HCT116 (cell line): ENCODE measurements at regions of chr19 and their contacts with region 1.

Region 1: DNA sequence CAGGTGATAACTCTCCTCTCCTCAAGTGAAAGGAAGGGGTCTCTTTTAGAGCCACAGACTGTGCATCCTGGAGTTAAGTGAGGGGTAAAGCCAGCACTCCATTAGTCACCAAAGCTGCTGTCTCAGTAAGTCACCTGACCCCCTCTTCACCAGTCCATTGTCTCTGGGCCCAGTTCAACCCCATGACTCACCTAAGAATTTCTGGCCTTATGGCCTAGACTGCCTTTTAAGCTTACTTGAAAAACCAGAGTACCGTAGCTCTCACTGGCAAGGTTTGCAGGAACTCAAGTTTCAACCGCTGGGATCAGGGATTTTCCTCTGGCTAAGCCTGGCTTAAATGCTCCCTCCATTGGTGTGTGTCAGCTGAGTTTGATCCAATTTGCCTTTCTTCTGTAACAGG is 23.4 kb upstream of the EID2 start:
- DNase-seq: peak; percentile 12
- ATAC-seq: peak; percentile 60
- H3K4me3 ChIP-seq: no peak overlapping the region
- H3K27ac ChIP-seq: no peak overlapping the region
- H3K4me1 ChIP-seq: peaks cover 0 to 8% of the 10 kb centered on the region in 2 experiments; a peak in 2 of 4 replicates
- H3K27me3 ChIP-seq: peaks cover 24% of the 10 kb centered on the region; the same call in 1 of the 2 replicates
- CTCF ChIP-seq: no peak
- POLR2A ChIP-seq: no peak
- RAD21 ChIP-seq: no peak

Region 2: GRCh38 chr19:39110263-39110967 is 453.0 kb before region 1 on chr19:
- CTCF ChIA-PET with region 1: no interaction called
- POLR2A ChIA-PET with region 1: no interaction called
- RAD21 ChIA-PET with region 1: no interaction called
- intact Hi-C with region 1: no loop called
- DNase-seq: peak; percentile 41
- ATAC-seq: peak; percentile 78
- H3K4me3 ChIP-seq: no peak overlapping the region
- H3K27ac ChIP-seq: no peak overlapping the region
- H3K4me1 ChIP-seq: peaks cover 17 to 29% of the 10 kb centered on the region in 2 experiments
- H3K27me3 ChIP-seq: no peaks in the 10 kb centered on the region
- CTCF ChIP-seq: peak; percentile 55 to 87 (median 80)
- POLR2A ChIP-seq: no peak
- RAD21 ChIP-seq: peak; percentile 75

Region 3: DNA sequence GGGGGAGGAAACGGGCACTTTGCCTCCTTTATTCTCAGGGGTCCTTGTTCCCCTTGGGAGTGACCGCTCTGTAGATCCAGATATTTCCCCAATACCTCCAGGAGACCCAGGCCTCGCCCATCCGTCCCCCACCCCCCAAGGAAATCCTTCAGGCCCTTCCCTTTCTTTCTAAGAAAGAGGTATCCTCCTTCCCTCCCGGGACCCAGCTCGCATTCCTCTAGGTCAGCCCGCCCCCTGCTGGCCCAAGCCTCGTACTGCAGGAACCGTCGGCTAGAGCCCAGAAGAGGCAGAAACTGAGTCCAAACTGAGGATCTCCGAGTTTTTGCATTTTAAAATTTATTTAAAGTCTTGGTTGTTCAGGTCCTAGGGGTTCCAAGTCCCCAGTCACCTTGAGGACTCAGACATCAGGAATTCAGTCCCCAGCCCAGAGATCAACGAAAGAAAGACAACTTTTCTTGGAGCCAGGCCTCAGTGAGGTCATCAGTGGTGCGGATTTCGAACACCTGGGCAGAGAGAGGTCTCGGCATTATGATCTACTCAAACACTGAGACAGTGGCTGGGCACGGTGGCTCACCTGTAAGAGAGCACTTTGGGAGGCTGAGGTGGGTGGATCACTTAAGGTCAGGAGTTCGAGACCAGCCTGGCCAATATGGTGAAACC is 235.2 kb before region 1 on chr19:
- CTCF ChIA-PET with region 1: no interaction called
- POLR2A ChIA-PET with region 1: no interaction called
- RAD21 ChIA-PET with region 1: no interaction called
- intact Hi-C with region 1: no loop called
- DNase-seq: no peak
- ATAC-seq: peak; percentile 83
- H3K4me3 ChIP-seq: no peak overlapping the region
- H3K27ac ChIP-seq: no peak overlapping the region
- H3K4me1 ChIP-seq: peaks cover 0 to 12% of the 10 kb centered on the region in 2 experiments; a peak in 1 of 4 replicates
- H3K27me3 ChIP-seq: no peaks in the 10 kb centered on the region
- CTCF ChIP-seq: peak; percentile 95 to 98 (median 96)
- POLR2A ChIP-seq: no peak
- RAD21 ChIP-seq: peak; percentile 97

Region 4: DNA sequence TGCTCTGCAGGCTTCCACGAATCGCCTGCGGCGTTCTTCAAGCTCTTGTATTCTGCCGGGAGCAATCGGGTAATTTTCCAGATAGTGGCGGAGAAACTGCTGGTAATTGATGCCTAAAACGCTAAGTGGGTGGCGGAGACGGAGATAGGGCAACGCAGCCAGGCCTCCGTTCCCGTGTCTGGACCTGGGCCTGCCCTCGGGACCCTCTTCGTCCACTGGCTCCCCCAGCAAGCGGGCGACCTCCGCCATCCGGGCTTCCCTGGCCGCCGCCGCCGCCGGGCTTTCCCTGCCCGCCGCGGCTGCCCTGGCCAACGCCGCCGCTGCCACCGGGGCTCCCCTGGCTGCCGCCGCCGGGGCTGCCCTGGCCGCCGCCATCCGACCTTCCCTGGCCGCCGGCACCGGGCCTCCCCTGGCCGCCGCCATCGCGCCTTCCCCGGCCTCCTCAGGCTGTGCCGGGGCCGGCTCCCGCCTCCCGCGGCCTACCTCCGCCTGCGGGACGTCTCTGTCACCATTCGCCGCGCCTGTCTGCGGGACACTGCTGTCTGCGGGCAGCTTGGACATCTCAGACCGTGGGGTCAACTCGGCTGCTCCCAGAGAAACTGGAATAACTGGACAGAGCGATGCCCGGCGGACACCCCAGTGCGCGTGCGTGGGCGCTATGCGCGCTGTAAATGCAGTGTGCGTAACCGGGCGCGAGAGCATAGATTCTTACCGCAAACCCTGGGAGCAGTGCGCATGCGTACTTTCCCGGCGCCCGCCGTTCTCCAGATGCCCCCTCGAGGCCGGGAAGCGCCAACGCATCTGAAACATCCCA is 23.7 kb before region 1 on chr19 and contains the start of gene EID2:
- CTCF ChIA-PET with region 1: no interaction called
- POLR2A ChIA-PET with region 1: no interaction called
- RAD21 ChIA-PET with region 1: no interaction called
- intact Hi-C with region 1: no loop called
- DNase-seq: peak; percentile 84
- ATAC-seq: peak; percentile 96
- H3K4me3 ChIP-seq: peak within 1 kb of the TSS; percentile 78 to 82
- H3K27ac ChIP-seq: peak within 1 kb of the TSS; percentile 86
- H3K4me1 ChIP-seq: peaks cover 11 to 19% of the 10 kb centered on the region in 2 experiments
- H3K27me3 ChIP-seq: no peaks in the 10 kb centered on the region
- CTCF ChIP-seq: peak; percentile 62 to 71 (median 65); a peak in 5 of 6 replicates
- POLR2A ChIP-seq: peak; percentile 77
- RAD21 ChIP-seq: peak; percentile 65
- total RNA-seq, gene EID2: 11.7 TPM

Region 5: DNA sequence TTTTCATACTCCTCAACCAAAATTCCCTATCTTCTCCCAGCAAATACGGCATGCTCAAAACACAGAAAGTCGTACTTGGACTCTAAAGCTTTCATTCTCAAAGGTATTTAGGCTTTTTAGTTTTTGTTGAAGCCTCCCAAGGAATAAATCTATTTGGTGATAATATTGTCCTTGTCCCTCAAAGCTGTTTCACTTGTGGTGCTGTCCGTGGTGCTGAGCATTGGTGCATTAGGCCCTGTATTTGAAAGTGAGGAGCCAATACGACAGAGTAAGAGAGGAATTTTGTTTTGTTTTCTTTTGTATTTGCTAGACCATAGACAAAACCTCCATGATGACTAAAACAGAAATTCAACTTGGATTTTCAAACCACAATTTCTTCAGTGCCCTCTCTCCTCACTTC is 35.7 kb after region 1 on chr19:
- CTCF ChIA-PET with region 1: no interaction called
- POLR2A ChIA-PET with region 1: no interaction called
- RAD21 ChIA-PET with region 1: no interaction called
- intact Hi-C with region 1: no loop called
- DNase-seq: no peak
- ATAC-seq: no peak
- H3K4me3 ChIP-seq: no peak overlapping the region
- H3K27ac ChIP-seq: no peak overlapping the region
- H3K4me1 ChIP-seq: no peaks in the 10 kb centered on the region
- H3K27me3 ChIP-seq: peaks cover 53% of the 10 kb centered on the region
- CTCF ChIP-seq: no peak
- POLR2A ChIP-seq: no peak
- RAD21 ChIP-seq: no peak

Region 6: GRCh38 chr19:39617745-39618144 is 54.3 kb after region 1 on chr19:
- CTCF ChIA-PET with region 1: no interaction called
- POLR2A ChIA-PET with region 1: no interaction called
- RAD21 ChIA-PET with region 1: no interaction called
- intact Hi-C with region 1: loop called (anchors 10 kb)
- DNase-seq: no peak
- ATAC-seq: no peak
- H3K4me3 ChIP-seq: no peak overlapping the region
- H3K27ac ChIP-seq: no peak overlapping the region
- H3K4me1 ChIP-seq: no peaks in the 10 kb centered on the region
- H3K27me3 ChIP-seq: peaks cover 41% of the 10 kb centered on the region
- CTCF ChIP-seq: no peak
- POLR2A ChIP-seq: no peak
- RAD21 ChIP-seq: no peak